ENCODE measurements at regions of chr12 and their contacts with region 1.

Region 1: GRCh38 chr12:50132505-50133135 is 20.6 kb downstream of the COX14 start:
- DNase-seq: no peak
- ATAC-seq: peak; percentile 51
- H3K4me3 ChIP-seq: no peak overlapping the region
- H3K27ac ChIP-seq: no peak overlapping the region
- H3K4me1 ChIP-seq: no peaks in the 10 kb centered on the region
- H3K27me3 ChIP-seq: no peaks in the 10 kb centered on the region
- CTCF ChIP-seq: peak; percentile 37 to 47 (median 46); a peak in 4 of 6 replicates
- EP300 ChIP-seq: no peak
- POLR2A ChIP-seq: no peak
- RAD21 ChIP-seq: peak; percentile 48

Region 2: DNA sequence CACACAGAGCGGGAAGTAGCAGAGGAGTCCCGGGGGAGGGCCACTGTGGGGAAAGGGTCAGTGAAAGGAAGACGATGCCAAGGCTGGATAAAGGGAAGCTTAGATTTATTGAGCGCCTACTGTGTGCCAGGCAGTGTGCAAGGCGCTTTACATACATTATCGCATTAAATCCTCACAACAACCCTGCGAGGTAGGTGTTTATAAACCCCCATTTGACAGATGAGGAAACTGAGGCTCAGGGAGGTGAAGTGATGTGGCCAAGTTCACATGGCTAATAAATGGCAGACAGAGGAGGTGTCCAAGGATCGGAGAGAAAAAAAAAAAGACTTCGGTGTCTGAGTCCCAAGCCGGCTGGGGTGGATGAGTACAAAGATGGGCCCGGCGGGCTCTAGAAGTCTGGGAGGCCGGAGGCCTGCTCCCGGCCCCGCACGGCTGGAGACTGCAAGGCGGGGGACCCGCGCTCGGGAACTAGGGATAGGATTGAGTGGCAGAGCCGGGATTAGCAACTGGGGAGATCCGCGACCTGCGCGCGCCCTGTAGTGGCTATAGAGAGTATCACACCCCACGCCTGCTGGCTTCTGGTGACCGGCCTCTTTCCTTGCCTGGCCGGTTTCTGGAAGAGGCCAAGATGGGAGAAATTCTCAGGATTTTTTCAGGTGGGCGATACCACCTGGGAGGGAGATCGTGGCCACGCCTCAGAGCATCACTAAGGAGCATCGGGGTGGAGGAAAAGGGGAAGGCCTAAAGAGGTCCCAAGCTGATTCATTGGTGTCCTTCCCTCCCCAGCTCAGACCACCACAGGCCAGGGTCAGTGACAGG is 1137.3 kb before region 1 on chr12:
- CTCF ChIA-PET with region 1: no interaction called
- POLR2A ChIA-PET with region 1: no interaction called
- RAD21 ChIA-PET with region 1: no interaction called
- SMC1A ChIA-PET with region 1: no interaction called
- in situ Hi-C with region 1: no loop called
- intact Hi-C with region 1: no loop called
- DNase-seq: no peak
- ATAC-seq: peak; percentile 31
- H3K4me3 ChIP-seq: no peak overlapping the region
- H3K27ac ChIP-seq: no peak overlapping the region
- H3K4me1 ChIP-seq: peaks cover 29% of the 10 kb centered on the region
- H3K27me3 ChIP-seq: no peaks in the 10 kb centered on the region; a peak in 1 of 4 replicates
- CTCF ChIP-seq: peak; percentile 68 to 84 (median 82)
- EP300 ChIP-seq: no peak
- POLR2A ChIP-seq: no peak
- RAD21 ChIP-seq: peak; percentile 62

Region 3: DNA sequence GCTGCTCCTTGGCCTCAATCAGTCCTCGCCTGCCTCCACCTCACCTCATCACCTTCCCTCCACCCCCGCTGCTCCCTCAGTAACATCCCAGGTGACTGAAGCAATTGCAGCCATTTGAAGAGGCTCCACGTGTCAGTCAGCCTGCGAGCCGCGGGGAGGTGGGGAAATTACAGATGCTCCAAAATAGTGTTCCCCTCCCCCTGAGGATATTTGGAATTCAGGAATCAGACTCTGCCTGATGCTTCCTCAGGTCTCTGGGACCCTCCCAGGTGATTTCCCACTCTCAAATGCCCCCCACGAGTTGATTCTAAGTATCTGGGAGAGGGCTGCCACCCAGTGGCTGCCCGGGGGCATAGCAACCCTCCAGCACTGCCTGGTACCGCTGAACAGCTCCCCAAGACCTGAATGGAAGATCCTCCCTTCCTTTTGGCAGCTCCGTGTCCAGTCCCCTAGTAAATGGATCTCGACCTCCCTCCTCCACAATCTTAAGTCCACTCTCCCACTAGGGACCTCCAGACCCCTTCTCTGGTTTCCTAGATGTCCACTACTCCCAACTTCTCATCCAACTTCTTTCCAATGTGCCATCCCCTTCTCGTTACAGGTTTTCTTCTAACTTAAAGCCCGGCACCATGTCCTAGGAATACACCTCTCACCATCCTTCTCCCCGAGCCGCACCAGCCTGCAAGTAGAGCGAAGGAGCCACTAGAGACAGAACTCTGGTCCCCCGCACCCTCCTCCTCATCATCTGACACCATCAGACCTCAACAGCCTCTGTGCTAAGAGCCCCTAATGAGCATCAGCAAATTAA is 76.6 kb before region 1 on chr12:
- CTCF ChIA-PET with region 1: no interaction called
- POLR2A ChIA-PET with region 1: no interaction called
- RAD21 ChIA-PET with region 1: no interaction called
- SMC1A ChIA-PET with region 1: no interaction called
- in situ Hi-C with region 1: no loop called
- intact Hi-C with region 1: no loop called
- DNase-seq: no peak
- ATAC-seq: peak; percentile 84
- H3K4me3 ChIP-seq: no peak overlapping the region
- H3K27ac ChIP-seq: no peak overlapping the region
- H3K4me1 ChIP-seq: 0 out of 2 replicates have a peak, but pooled peaks cover 4% of the 10 kb centered on the region
- H3K27me3 ChIP-seq: peaks cover 12 to 21% of the 10 kb centered on the region in 2 experiments; a peak in 3 of 4 replicates
- CTCF ChIP-seq: peak; percentile 81 to 98 (median 96)
- EP300 ChIP-seq: no peak
- POLR2A ChIP-seq: no peak
- RAD21 ChIP-seq: peak; percentile 79

Region 4: GRCh38 chr12:50314629-50315312 is 182.2 kb after region 1 on chr12:
- CTCF ChIA-PET with region 1: interaction called, 15 read pairs
- POLR2A ChIA-PET with region 1: interaction called, 5 read pairs
- RAD21 ChIA-PET with region 1: interaction called, 9 read pairs
- SMC1A ChIA-PET with region 1: interaction called, 5 read pairs
- in situ Hi-C with region 1: no loop called
- intact Hi-C with region 1: loop called (anchors 1 kb)
- DNase-seq: no peak
- ATAC-seq: peak; percentile 62
- H3K4me3 ChIP-seq: no peak overlapping the region
- H3K27ac ChIP-seq: no peak overlapping the region
- H3K4me1 ChIP-seq: no peaks in the 10 kb centered on the region
- H3K27me3 ChIP-seq: no peaks in the 10 kb centered on the region
- CTCF ChIP-seq: peak; percentile 44 to 63 (median 51); a peak in 5 of 6 replicates
- EP300 ChIP-seq: no peak
- POLR2A ChIP-seq: no peak
- RAD21 ChIP-seq: peak; percentile 83

Measured in GM12878 (cell line).